ENCODE measurements at regions of chr17 and their contacts with region 1.

Region 1: GRCh38 chr17:22470411-22471175 is 778.3 kb downstream of the KCNJ18 start:
- DNase-seq: no peak
- ATAC-seq: no peak
- H3K4me3 ChIP-seq: no peak overlapping the region
- H3K27ac ChIP-seq: no peak overlapping the region
- H3K4me1 ChIP-seq: no peaks in the 10 kb centered on the region
- H3K27me3 ChIP-seq: no peaks in the 10 kb centered on the region
- CTCF ChIP-seq: no peak
- POLR2A ChIP-seq: no peak

Region 2: GRCh38 chr17:22158364-22158763 is 312.2 kb before region 1 on chr17:
- intact Hi-C with region 1: no loop called
- DNase-seq: no peak
- ATAC-seq: no peak
- H3K4me3 ChIP-seq: no peak overlapping the region
- H3K27ac ChIP-seq: no peak overlapping the region
- H3K4me1 ChIP-seq: no peaks in the 10 kb centered on the region
- H3K27me3 ChIP-seq: no peaks in the 10 kb centered on the region
- CTCF ChIP-seq: no peak
- POLR2A ChIP-seq: no peak

Region 3: GRCh38 chr17:22374741-22375140 is 95.9 kb before region 1 on chr17:
- intact Hi-C with region 1: no loop called
- DNase-seq: no peak
- ATAC-seq: no peak
- H3K4me3 ChIP-seq: no peak overlapping the region
- H3K27ac ChIP-seq: no peak overlapping the region
- H3K4me1 ChIP-seq: no peaks in the 10 kb centered on the region
- H3K27me3 ChIP-seq: no peaks in the 10 kb centered on the region
- CTCF ChIP-seq: no peak
- POLR2A ChIP-seq: no peak

Region 4: DNA sequence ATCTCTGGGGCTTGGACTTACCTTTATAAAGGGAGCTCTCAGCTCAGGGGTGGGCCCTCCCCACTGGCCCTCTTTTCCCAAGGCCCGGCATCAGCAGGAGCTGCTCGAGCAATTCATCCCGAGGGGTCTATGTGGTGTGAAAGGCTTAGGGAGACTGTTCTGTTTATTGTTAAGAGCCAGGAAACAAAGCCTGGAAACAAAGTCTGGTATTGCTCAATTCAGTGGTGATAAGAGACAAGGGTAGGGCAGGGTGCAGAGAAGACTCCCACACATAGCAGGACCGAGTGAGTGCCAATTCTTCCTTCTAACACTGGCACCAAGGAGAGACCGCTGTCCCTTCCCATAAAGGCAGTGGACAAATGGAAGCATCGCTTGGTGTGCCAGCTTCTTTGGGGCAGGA is 27.5 kb before region 1 on chr17:
- intact Hi-C with region 1: loop called in 1 of 10 experiments (anchors 2 kb)
- DNase-seq: no peak
- ATAC-seq: no peak
- H3K4me3 ChIP-seq: no peak overlapping the region
- H3K27ac ChIP-seq: no peak overlapping the region
- H3K4me1 ChIP-seq: no peaks in the 10 kb centered on the region
- H3K27me3 ChIP-seq: peaks cover 0 to 6% (median 0%) of the 10 kb centered on the region in 9 donors
- CTCF ChIP-seq: no peak
- POLR2A ChIP-seq: no peak

Region 5: DNA sequence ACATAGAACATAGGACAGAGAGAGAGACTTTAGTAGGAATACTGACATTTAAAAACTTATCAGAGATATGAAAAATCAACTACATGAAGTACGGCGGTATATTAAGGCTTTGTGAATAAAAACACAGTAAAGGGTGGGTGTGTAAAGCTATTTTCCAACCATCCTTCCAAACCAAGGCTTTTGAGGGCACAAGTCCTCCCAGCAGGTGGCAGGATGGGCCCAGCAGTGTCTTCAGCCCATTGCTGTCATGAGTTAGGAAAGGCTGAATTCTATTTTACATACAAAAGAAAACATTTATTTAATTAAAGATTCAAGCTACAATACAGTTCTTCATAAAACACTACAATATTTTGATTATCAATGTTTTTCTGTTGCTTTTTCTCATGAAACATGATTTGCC is 63.2 kb after region 1 on chr17:
- intact Hi-C with region 1: loop called in 1 of 10 experiments (anchors 10 kb)
- DNase-seq: no peak
- ATAC-seq: no peak
- H3K4me3 ChIP-seq: no peak overlapping the region
- H3K27ac ChIP-seq: no peak overlapping the region
- H3K4me1 ChIP-seq: no peaks in the 10 kb centered on the region
- H3K27me3 ChIP-seq: no peaks in the 10 kb centered on the region
- CTCF ChIP-seq: no peak
- POLR2A ChIP-seq: no peak